H1 (cell line): ENCODE measurements at regions of chr19 and their contacts with region 1.

Region 1: DNA sequence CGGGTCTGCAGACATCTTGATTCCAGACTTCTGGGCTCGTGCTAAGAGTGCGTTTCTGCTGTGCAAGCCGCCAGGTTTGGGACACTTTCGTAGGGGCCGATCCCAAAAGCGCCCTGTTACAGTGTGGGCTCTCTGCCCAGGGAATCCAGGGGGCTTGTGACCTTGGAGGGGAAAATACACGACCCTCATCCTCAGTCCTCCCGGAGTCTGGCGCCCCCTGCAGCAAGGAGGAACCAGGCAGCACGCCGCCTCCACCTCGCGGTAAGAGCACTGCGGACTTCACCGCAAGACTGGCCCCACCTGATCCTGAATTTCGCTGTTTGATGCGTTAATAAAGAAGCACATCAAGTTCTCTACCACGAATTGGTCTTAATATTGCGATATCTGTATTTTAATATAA is 5.2 kb downstream of the POLRMT start:
- DNase-seq: peak; percentile 33 to 84
- H3K4me3 ChIP-seq: no peak overlapping the region
- H3K27ac ChIP-seq: no peak overlapping the region
- H3K4me1 ChIP-seq: peaks cover 0 to 3% (median 1%) of the 10 kb centered on the region in 4 experiments; a peak in 3 of 7 replicates
- H3K27me3 ChIP-seq: no peaks in the 10 kb centered on the region
- CTCF ChIP-seq: peak; percentile 86 to 96 (median 86)
- EP300 ChIP-seq: no peak
- POLR2A ChIP-seq: no peak
- RAD21 ChIP-seq: peak; percentile 50 to 63; a peak in 3 of 4 replicates

Region 2: DNA sequence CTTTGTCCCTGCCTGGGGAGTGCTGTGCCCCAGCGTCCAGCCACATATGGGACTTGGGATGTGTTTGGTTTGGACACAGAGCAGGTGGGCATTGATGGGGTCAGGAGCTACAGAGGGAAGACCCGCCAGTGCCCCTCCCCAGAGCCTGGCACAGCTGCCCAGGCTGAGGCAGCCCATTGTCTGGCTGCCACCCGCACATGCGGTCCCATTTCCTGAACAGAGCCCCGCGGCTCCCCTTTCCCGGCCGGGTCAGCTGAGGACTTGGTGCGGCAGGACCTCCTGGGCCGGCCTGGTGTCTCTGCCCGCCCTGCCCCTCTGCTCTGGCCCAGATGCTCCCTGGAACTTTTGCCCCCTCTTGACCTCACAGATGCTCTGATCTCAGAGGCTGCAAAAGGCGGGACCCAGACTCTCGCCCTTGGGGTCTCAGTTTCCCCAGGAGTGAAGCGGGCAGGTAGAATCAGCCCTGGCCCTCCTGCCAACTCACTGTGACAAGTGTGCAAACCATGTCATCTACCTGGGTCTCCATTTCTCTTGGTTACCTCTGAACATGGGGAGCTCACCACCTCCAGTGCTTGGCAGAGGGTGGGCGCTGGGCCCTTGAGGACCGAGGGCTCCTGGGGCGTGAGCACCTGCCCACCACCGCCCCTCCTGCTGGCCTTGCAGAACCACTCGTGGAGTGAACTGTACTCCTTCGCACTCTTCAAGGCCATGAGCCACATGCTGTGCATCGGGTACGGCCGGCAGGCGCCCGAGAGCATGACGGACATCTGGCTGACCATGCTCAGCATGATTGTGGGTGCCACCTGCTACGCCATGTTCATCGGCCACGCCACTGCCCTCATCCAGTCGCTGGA is 20.6 kb before region 1 on chr19:
- CTCF ChIA-PET with region 1: interaction called, 10 read pairs
- POLR2A ChIA-PET with region 1: interaction called, 4 read pairs
- DNase-seq: no peak
- H3K4me3 ChIP-seq: no peak overlapping the region
- H3K27ac ChIP-seq: no peak overlapping the region
- H3K4me1 ChIP-seq: no peaks in the 10 kb centered on the region
- H3K27me3 ChIP-seq: no peaks in the 10 kb centered on the region
- CTCF ChIP-seq: no peak
- EP300 ChIP-seq: no peak
- POLR2A ChIP-seq: no peak
- RAD21 ChIP-seq: no peak

Region 3: DNA sequence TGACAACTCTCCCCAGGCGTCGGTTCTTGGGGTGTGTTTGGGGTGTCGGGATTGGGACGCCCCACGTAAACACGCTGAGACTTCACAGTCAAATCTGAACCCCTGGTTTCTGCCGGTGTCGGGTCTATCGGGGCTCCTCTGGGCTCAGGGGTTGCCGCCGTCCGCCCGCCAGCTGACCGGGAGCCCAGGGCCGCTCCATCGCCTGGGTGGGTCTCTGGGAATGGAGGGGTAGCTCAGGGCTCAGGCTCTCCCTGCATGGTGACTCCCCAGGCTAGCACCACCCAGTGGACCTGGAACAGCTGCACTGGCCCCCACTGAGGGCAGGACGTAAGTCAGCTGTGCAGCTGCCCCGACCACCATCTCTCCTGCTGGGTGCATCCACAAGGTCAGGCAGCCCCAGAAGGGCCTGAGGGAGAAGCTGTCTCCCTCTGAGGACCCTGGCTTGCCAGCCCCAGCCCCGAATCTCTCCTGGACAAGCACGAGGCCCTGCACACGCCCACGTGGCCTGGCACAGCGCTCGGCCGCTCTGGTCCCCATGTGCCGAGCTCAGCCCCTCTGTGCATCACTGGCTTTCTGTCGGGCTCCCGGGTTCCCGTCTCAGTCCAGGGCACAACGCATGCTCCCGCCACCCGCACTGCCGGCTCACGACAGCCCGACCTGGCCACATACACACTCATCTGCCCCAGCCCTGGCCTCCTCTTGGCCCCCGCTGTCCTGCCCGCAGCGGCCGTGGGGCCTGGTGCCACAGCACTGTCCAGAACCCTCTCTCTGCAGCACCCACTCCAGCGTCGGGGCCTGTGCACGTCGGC is 28.8 kb after region 1 on chr19:
- CTCF ChIA-PET with region 1: interaction called, 10 read pairs
- POLR2A ChIA-PET with region 1: interaction called, 4 read pairs
- DNase-seq: no peak
- H3K4me3 ChIP-seq: no peak overlapping the region
- H3K27ac ChIP-seq: no peak overlapping the region
- H3K4me1 ChIP-seq: peaks cover 0 to 11% (median 5%) of the 10 kb centered on the region in 4 experiments; a peak in 5 of 7 replicates
- H3K27me3 ChIP-seq: no peaks in the 10 kb centered on the region
- CTCF ChIP-seq: no peak
- EP300 ChIP-seq: no peak
- POLR2A ChIP-seq: no peak
- RAD21 ChIP-seq: no peak